Cardiac septum (tissue), 1 donor: ENCODE measurements at regions of chr3 and their contacts with region 1.

Region 1: GRCh38 chr3:190773948-190774347 is 88.5 kb downstream of the GMNC start:
- DNase-seq: no peak

Region 2: DNA sequence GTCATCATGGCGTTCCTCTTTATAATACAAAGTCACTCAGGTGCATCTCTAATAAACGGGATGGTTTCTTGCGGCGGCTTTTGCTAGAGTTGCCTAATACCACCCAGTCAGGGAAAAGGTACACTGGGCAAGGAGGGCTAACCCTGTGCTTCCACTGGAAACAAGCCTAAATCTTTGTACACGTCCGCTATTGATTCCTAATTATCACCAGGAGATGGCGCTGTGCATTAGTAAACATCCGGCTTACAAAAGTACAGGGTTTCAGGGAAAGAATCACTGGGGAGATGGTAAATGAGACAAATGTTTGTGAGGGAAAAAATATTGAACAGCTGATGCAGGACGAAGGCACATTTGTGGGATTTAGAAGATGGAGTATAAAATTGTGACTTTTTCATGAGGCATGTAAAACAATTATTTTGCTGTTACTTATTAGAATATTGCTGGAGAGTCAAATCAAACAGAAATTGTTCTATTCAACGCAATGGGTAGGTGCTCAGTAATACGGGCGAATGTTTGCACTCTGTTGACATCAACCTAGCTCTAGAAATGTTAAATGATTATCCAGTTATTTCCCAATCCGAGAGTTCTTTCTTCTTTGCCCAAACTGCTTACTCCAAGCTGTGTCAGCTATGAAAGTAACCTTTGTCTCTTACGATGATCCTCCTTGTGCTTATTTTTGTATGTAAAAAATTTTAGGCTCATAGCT is 38.0 kb after region 1 on chr3:
- intact Hi-C with region 1: loop called (anchors 5 kb)
- DNase-seq: no peak

Region 3: DNA sequence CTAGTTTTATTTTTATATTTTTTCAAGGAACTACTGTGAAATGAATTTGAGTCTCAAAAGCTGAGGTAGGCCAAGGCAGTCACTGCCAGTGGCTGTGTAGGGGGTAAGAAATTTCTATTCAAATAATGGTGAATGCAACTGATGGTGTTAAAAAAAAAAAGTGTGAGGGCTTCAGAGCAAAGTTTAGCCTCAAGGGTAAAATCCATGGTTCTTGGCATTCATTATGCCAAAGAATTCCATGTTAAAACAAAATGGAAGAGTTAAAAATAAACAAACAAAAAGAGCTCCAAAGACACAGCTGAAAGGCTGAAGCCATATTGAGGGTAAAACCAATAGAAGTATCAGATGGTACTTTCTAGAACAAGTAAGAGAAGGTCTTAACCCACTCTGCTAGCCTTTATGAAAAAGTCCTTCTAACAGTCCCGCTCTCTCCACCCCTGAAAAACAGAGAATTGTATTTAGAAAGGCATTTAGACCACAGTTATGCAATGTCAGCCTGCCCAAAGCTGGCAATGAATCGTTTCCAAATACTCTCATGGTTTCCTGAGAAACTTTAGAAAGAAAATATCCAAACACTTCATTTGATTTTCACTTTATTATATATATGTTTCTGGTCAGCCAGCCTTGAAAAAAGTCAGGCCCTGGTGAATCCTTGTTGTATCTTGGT is 246.9 kb after region 1 on chr3:
- intact Hi-C with region 1: no loop called
- DNase-seq: no peak